HepG2 (cell line): ENCODE measurements at regions of chr3 and their contacts with region 1.

Region 1: DNA sequence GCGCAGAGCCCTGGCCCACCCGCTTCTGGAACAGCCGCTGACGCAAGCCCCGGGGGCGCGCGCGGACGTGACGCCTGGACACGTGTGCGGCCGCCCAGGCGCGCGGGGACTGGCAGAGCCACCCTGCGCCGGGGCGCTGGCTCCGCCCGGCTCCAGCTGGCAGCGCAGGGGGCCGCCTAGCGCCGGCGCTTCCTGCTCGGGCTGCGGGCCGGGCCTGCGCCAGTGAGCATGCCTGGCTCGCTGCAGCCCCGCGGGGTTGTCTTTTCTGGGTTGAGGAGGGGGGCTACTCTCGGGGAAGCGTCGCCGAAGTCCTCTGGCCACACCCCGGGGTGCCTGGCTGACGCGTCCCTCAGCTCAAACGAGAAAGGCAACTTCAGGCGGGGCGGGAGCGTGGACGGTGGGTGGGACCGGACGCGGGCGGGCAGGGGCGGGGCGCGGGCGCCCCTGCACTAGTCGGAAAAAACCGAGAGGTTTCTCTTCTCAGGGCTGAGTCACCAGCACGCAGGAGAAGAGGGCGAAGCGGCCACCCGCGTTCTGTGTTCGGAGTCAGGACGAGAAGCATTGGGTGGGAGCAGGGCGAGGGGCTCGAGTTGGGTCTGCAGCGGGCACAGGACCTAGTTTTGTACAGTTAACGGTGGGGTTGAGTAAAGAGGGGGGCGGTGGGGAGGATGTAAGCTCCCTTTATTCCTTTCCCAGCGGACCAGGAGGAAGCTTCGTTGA is at the start of gene SIAH2:
- DNase-seq: peak; percentile 92
- ATAC-seq: peak; percentile 88
- H3K4me3 ChIP-seq: peak within 1 kb of the TSS; percentile 97 to 100 (median 98)
- H3K27ac ChIP-seq: peak within 1 kb of the TSS; percentile 99
- H3K4me1 ChIP-seq: peaks cover 59% of the 10 kb centered on the region
- H3K27me3 ChIP-seq: no peaks in the 10 kb centered on the region; a peak in 2 of 5 replicates
- CTCF ChIP-seq: peak; percentile 35; the same call in 1 of the 2 replicates
- EP300 ChIP-seq: peak in 1 of 2 experiments; percentile 0; a peak in 1 of 4 replicates
- POLR2A ChIP-seq: peak; percentile 84 to 90
- RAD21 ChIP-seq: peak; percentile 74
- total RNA-seq, gene SIAH2: 71.8 and 79.5 TPM in 2 replicates

Region 2: DNA sequence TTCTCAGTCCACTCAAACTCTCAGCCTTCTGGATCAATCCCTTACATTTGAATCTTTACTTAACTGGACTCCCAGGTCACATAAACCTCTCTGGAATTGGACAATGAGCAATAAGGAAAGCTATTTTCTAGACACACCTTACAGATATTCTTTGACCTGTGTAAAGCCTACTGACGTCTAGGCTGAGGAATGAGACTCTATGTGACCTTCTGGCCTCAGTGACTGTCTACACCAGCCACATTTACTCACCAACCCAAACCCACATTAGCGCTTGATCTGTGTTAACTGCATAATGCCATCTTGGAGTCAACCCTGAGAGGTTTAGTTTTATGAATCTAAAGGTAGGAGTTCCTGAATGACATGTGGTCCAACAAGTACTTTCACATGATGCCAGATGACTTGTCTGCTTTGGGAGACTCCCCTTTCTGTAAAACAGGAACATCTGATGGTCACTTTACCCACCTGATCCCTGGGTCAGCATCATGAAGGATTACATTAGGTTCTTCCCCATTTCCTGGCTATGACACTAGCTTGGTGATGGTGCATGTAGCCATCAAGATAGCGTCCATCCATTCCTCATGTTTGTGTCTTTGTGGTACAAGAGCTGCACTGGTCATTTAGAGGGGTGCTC is 999.6 kb before region 1 on chr3:
- CTCF ChIA-PET with region 1: no interaction called
- POLR2A ChIA-PET with region 1: no interaction called
- in situ Hi-C with region 1: no loop called
- intact Hi-C with region 1: no loop called
- DNase-seq: no peak
- ATAC-seq: no peak
- H3K4me3 ChIP-seq: no peak overlapping the region
- H3K27ac ChIP-seq: no peak overlapping the region
- H3K4me1 ChIP-seq: no peaks in the 10 kb centered on the region
- H3K27me3 ChIP-seq: peaks cover 1 to 10% of the 10 kb centered on the region in 2 experiments; a peak in 2 of 5 replicates
- CTCF ChIP-seq: no peak
- EP300 ChIP-seq: no peak
- POLR2A ChIP-seq: no peak
- RAD21 ChIP-seq: no peak

Region 3: GRCh38 chr3:150703299-150704134 is 59.8 kb before region 1 on chr3 and contains the start of gene ERICH6:
- CTCF ChIA-PET with region 1: no interaction called
- POLR2A ChIA-PET with region 1: interaction called, 14 read pairs
- in situ Hi-C with region 1: no loop called
- intact Hi-C with region 1: no loop called
- DNase-seq: peak; percentile 81
- ATAC-seq: peak; percentile 100
- H3K4me3 ChIP-seq: peak within 1 kb of the TSS; percentile 74 to 80 (median 76)
- H3K27ac ChIP-seq: peak within 1 kb of the TSS; percentile 84
- H3K4me1 ChIP-seq: peaks cover 9% of the 10 kb centered on the region
- H3K27me3 ChIP-seq: no peaks in the 10 kb centered on the region; a peak in 1 of 5 replicates
- CTCF ChIP-seq: peak; percentile 40; the same call in 1 of the 2 replicates
- EP300 ChIP-seq: no peak
- POLR2A ChIP-seq: peak; percentile 48 to 55; a peak in 3 of 4 replicates
- RAD21 ChIP-seq: no peak
- total RNA-seq, gene ERICH6: not detected in 2 replicates

Region 4: GRCh38 chr3:150721285-150722130 is 41.8 kb before region 1 on chr3:
- CTCF ChIA-PET with region 1: interaction called, 5 read pairs
- POLR2A ChIA-PET with region 1: interaction called, 16 read pairs
- in situ Hi-C with region 1: no loop called
- intact Hi-C with region 1: loop called (anchors 1 kb)
- DNase-seq: peak; percentile 67
- ATAC-seq: peak; percentile 79
- H3K4me3 ChIP-seq: no peak overlapping the region
- H3K27ac ChIP-seq: peak overlapping the region; percentile 28
- H3K4me1 ChIP-seq: peaks cover 42% of the 10 kb centered on the region
- H3K27me3 ChIP-seq: no peaks in the 10 kb centered on the region
- CTCF ChIP-seq: peak; percentile 91
- EP300 ChIP-seq: no peak
- POLR2A ChIP-seq: no peak
- RAD21 ChIP-seq: peak; percentile 86

Region 5: DNA sequence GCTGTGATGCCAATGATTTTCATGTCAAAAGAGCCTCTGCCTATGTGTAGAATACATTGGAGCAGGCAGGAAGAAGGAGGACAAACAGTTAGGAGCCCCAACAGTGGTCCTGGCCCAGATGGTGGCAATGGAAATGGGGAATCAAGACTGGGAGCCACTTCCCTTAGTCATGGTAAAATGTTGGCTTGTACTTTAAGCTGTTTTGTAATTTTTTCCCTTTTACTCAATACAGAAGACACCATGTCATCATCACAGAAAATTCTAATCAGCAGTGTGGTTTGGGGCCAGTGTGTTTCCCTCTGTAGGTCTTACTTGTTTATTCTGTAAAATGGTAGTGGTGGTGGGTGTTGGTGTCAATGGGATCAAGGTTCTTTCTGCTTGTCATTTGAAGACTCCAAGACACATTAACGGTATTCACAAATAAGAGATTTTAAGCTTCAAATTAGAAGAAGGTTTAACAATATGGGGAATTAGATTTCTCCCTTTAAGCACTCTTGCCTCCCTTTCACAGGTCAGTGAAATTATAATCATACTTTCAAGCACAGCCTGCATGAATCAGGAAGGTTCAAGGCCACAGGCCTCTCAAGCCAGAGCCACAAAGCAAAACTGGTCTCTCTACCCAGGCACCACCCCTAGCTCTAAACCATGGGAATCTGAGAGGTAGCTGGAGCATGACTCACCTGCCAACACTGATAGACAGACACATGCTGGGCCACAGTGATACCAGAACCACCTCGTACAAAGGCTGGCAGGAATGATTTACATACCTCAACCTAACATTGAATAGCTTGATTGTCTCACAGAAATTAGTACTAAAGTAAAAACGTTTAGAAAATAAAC is 25.2 kb before region 1 on chr3:
- CTCF ChIA-PET with region 1: no interaction called
- POLR2A ChIA-PET with region 1: interaction called, 265 read pairs
- in situ Hi-C with region 1: no loop called
- intact Hi-C with region 1: loop called (anchors 1 kb)
- DNase-seq: peak; percentile 96
- ATAC-seq: peak; percentile 73
- H3K4me3 ChIP-seq: peak overlapping the region in 1 of 3 experiments; percentile 38; a peak in 1 of 6 replicates
- H3K27ac ChIP-seq: peak overlapping the region; percentile 99
- H3K4me1 ChIP-seq: peaks cover 100% of the 10 kb centered on the region
- H3K27me3 ChIP-seq: no peaks in the 10 kb centered on the region
- CTCF ChIP-seq: no peak
- EP300 ChIP-seq: peak; percentile 41 to 90; a peak in 3 of 4 replicates
- POLR2A ChIP-seq: no peak; a peak in 1 of 4 replicates
- RAD21 ChIP-seq: 0 out of 2 replicates have a peak, but pooled peaks have one; percentile 12

Region 6: GRCh38 chr3:150751753-150752263 is 11.5 kb before region 1 on chr3:
- CTCF ChIA-PET with region 1: no interaction called
- POLR2A ChIA-PET with region 1: interaction called, 76 read pairs
- in situ Hi-C with region 1: no loop called
- intact Hi-C with region 1: no loop called
- DNase-seq: peak; percentile 38
- ATAC-seq: peak; percentile 26
- H3K4me3 ChIP-seq: no peak overlapping the region
- H3K27ac ChIP-seq: peak overlapping the region; percentile 27
- H3K4me1 ChIP-seq: peaks cover 97% of the 10 kb centered on the region
- H3K27me3 ChIP-seq: no peaks in the 10 kb centered on the region
- CTCF ChIP-seq: no peak
- EP300 ChIP-seq: no peak
- POLR2A ChIP-seq: 0 out of 4 replicates have a peak, but pooled peaks of 1 of the 2 experiments have one; percentile 18
- RAD21 ChIP-seq: no peak

Region 7: GRCh38 chr3:150775091-150775501 is 11.8 kb after region 1 on chr3:
- CTCF ChIA-PET with region 1: interaction called, 4 read pairs
- POLR2A ChIA-PET with region 1: interaction called, 104 read pairs
- in situ Hi-C with region 1: no loop called
- intact Hi-C with region 1: loop called (anchors 1 kb)
- DNase-seq: no peak
- ATAC-seq: no peak
- H3K4me3 ChIP-seq: no peak overlapping the region
- H3K27ac ChIP-seq: no peak overlapping the region
- H3K4me1 ChIP-seq: peaks cover 42% of the 10 kb centered on the region
- H3K27me3 ChIP-seq: no peaks in the 10 kb centered on the region
- CTCF ChIP-seq: no peak
- EP300 ChIP-seq: no peak
- POLR2A ChIP-seq: no peak
- RAD21 ChIP-seq: no peak

Region 8: GRCh38 chr3:150787741-150788370 is 24.6 kb after region 1 on chr3:
- CTCF ChIA-PET with region 1: no interaction called
- POLR2A ChIA-PET with region 1: interaction called, 4 read pairs
- in situ Hi-C with region 1: no loop called
- intact Hi-C with region 1: loop called (anchors 1 kb)
- DNase-seq: peak; percentile 53
- ATAC-seq: peak; percentile 95
- H3K4me3 ChIP-seq: no peak overlapping the region
- H3K27ac ChIP-seq: no peak overlapping the region
- H3K4me1 ChIP-seq: peaks cover 7% of the 10 kb centered on the region; the same call in 1 of the 2 replicates
- H3K27me3 ChIP-seq: peaks cover 2 to 10% of the 10 kb centered on the region in 2 experiments; a peak in 2 of 5 replicates
- CTCF ChIP-seq: peak; percentile 94
- EP300 ChIP-seq: no peak
- POLR2A ChIP-seq: no peak
- RAD21 ChIP-seq: peak; percentile 78

Region 9: GRCh38 chr3:150970665-150971324 is 207.5 kb after region 1 on chr3:
- CTCF ChIA-PET with region 1: no interaction called
- POLR2A ChIA-PET with region 1: no interaction called
- in situ Hi-C with region 1: no loop called
- intact Hi-C with region 1: no loop called
- DNase-seq: no peak
- ATAC-seq: no peak
- H3K4me3 ChIP-seq: no peak overlapping the region
- H3K27ac ChIP-seq: no peak overlapping the region
- H3K4me1 ChIP-seq: no peaks in the 10 kb centered on the region
- H3K27me3 ChIP-seq: peaks cover 0 to 7% of the 10 kb centered on the region in 2 experiments; a peak in 1 of 5 replicates
- CTCF ChIP-seq: no peak
- EP300 ChIP-seq: no peak
- POLR2A ChIP-seq: no peak
- RAD21 ChIP-seq: no peak